Activated CD4-positive, alpha-beta T cell treated with anti-CD3 and anti-CD28 coated beads for 36 hours (primary cell): ENCODE measurements at regions of chr21 and their contacts with region 1.

Region 1: DNA sequence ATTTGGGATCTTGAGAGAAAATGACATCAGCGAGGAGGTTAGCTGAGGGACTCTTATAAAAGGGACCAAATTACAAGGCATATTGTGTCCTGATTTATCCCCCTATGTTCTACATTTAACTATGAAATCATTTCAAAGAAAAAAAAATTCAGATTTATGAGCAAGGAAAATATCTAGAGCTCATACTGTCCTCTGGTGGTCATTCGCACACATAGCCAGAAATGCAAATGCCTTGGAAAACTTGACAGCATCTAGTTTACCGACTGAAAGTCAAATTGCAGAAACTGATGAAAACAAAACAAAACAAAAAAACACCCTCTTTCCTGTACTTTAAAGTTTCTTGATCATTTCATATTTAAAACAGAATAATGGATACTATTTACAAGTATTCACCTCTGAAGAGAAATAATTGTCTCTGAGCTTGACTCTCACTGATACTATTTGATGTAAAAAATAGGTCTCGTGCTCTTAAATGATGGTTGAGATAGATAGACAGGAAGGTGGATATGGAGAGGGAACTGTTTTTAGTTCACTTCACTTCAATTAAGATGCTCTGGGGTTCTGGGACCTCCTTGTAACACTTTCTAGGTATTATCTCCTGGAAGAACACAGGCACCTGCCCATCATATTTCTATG is 253.8 kb downstream of the PCP4 start:
- DNase-seq: no peak
- ATAC-seq: no peak
- H3K4me3 Mint-ChIP-seq: no peak overlapping the region
- H3K27ac Mint-ChIP-seq: no peak overlapping the region
- H3K4me1 Mint-ChIP-seq: no peaks in the 10 kb centered on the region
- H3K27me3 Mint-ChIP-seq: no peaks in the 10 kb centered on the region

Region 2: DNA sequence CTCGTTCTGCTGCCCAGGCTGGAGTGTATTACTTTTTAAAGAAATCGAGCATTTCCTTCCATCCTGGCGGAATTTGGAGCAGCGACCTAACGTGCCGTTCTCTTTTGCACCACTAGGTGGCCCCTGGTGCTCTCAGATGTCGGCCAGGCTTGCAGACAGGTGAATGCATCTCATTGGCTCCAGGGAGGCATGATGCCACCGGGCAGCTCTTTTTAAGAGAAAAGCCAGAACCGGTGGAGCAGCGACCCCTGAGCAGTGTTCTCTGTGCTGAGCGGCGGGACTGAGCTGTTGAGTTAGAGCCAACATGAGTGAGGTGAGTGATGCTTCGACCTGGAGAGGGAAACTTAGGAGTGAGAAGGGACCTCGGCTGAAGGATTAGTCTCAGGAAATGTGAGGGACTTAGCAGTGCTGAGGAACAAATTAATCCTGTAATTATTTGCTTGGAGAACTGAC is 253.8 kb before region 1 on chr21 and contains the start of gene PCP4:
- CTCF ChIA-PET with region 1: interaction called, 5 read pairs
- POLR2A ChIA-PET with region 1: no interaction called
- intact Hi-C with region 1: loop called (anchors 1 to 2 kb)
- DNase-seq: peak; percentile 68
- ATAC-seq: peak; percentile 23
- H3K4me3 Mint-ChIP-seq: no peak within 1 kb of the TSS
- H3K27ac Mint-ChIP-seq: no peak within 1 kb of the TSS
- H3K4me1 Mint-ChIP-seq: peaks cover 4% of the 10 kb centered on the region
- H3K27me3 Mint-ChIP-seq: peaks cover 9% of the 10 kb centered on the region
- total RNA-seq, gene PCP4: not detected